Activated naive CD4-positive, alpha-beta T cell treated with anti-CD3 and anti-CD28 coated beads, Interleukin-2, amount 10 ng/mL, durations not matched to agents 7 days and 5 days (primary cell): ENCODE measurements at regions of chr9 and their contacts with region 1.

Region 1: GRCh38 chr9:73104342-73104741 is 47.3 kb upstream of the ANXA1 start:
- DNase-seq: no peak
- H3K4me3 Mint-ChIP-seq: no peak overlapping the region
- H3K27ac Mint-ChIP-seq: no peak overlapping the region
- H3K4me1 Mint-ChIP-seq: no peaks in the 10 kb centered on the region
- H3K27me3 Mint-ChIP-seq: no peaks in the 10 kb centered on the region

Region 2: DNA sequence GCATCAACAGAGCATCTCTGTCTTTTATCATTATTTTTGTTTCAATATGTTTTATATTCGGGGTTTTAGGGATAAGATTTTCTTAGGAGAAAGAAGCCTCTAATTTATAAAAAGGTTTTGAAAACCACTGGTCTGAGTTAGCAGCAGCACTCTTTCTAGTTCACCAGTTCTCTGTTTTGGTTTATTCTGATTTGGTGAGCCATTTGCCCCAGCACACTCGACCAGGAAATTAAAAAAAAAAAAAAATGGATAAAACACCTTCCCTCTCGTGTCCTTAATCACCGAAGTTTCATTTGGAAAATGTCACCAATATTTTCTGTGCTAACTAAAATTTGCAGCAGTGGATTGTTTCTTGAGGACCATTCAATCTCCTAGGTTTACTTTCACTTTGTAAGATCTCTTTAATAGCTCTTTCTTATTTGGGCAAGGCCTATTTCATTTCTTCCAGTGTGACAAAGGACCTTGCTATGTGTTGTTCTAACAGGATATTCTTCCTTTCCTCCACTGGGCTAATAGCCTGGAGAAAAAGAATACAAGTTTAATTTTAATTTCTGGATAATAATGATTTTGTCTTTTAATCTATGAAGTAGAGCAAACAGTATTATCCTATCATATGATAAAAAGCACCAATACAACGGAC is 10.5 kb before region 1 on chr9:
- CTCF ChIA-PET with region 1: interaction called, 10 read pairs
- DNase-seq: no peak
- H3K4me3 Mint-ChIP-seq: no peak overlapping the region
- H3K27ac Mint-ChIP-seq: no peak overlapping the region
- H3K4me1 Mint-ChIP-seq: peaks cover 2% of the 10 kb centered on the region
- H3K27me3 Mint-ChIP-seq: no peaks in the 10 kb centered on the region

Region 3: DNA sequence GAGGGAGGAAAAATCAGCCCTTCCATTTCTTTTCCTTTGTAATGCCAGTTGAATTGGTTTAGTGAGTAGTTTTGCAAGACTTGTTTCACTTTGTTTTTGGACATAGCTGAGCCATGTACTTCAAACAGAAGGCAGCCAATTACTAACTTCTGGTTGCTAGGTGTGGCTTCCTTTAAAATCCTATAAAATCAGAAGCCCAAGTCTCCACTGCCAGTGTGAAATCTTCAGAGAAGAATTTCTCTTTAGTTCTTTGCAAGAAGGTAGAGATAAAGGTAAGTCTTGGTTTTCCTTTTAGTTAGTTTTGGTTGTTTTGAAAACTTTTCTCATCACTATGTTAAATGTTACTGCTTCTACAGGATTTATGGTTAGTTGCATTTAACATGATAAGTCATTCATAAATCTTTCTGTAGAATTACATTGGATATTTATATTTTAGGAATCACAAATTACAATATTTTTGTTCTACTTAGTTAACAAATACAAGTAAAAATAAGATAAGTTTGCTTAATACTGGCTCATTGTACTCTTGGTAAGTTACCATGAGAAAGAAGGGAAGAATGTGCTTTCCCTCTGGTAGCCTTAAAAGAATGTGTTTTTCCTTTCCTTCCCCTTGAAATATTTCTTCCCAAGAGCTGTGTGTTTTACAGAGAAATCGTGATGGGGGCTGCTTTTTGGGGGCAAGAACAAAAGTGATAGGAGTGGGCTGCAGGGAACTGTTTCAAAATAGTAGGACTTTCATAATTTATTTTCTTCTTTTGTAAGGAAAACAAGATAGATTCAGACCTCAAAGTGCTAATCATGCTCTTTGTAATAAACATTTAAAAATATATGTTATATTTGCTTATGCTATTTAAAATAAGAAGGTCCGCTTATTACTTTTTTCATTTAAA is 47.6 kb after region 1 on chr9 and contains the start of gene ANXA1:
- CTCF ChIA-PET with region 1: interaction called, 15 read pairs
- DNase-seq: no peak
- H3K4me3 Mint-ChIP-seq: peak within 1 kb of the TSS; percentile 78
- H3K27ac Mint-ChIP-seq: peak within 1 kb of the TSS; percentile 86
- H3K4me1 Mint-ChIP-seq: peaks cover 82% of the 10 kb centered on the region
- H3K27me3 Mint-ChIP-seq: no peaks in the 10 kb centered on the region

Region 4: GRCh38 chr9:73166468-73166867 is 62.1 kb after region 1 on chr9:
- CTCF ChIA-PET with region 1: interaction called, 10 read pairs
- DNase-seq: no peak
- H3K4me3 Mint-ChIP-seq: no peak overlapping the region
- H3K27ac Mint-ChIP-seq: no peak overlapping the region
- H3K4me1 Mint-ChIP-seq: peaks cover 12% of the 10 kb centered on the region
- H3K27me3 Mint-ChIP-seq: no peaks in the 10 kb centered on the region

Region 5: DNA sequence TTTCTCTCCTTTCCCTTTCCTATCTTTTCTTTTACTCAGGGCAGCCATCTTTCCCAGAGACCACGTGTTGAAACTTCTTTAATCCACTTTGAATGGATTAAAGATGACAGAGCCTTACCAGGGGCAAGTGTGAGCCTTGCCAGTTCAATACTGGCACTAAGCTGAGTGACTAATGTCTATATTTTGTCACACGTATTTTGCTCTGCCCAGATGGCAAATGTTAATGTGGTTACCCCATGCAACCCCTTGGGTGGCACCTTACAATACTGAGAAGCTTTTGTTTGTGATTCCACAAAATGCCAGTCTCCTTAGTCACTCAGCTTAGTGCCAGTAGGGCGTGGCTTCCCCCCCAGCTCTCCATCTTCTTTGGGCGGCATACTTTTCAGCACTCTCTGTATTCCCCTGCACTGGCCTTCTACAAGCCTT is 72.1 kb after region 1 on chr9:
- CTCF ChIA-PET with region 1: interaction called, 51 read pairs
- DNase-seq: no peak
- H3K4me3 Mint-ChIP-seq: no peak overlapping the region
- H3K27ac Mint-ChIP-seq: no peak overlapping the region
- H3K4me1 Mint-ChIP-seq: no peaks in the 10 kb centered on the region
- H3K27me3 Mint-ChIP-seq: no peaks in the 10 kb centered on the region

Region 6: GRCh38 chr9:73183917-73184861 is 79.8 kb after region 1 on chr9:
- CTCF ChIA-PET with region 1: interaction called, 51 read pairs
- DNase-seq: no peak
- H3K4me3 Mint-ChIP-seq: no peak overlapping the region
- H3K27ac Mint-ChIP-seq: no peak overlapping the region
- H3K4me1 Mint-ChIP-seq: no peaks in the 10 kb centered on the region
- H3K27me3 Mint-ChIP-seq: peaks cover 5% of the 10 kb centered on the region